Pancreas (tissue), 10 donors: ENCODE measurements at regions of chr9 and their contacts with region 1.

Region 1: GRCh38 chr9:136122425-136123383 is 4.0 kb upstream of the TMEM250 start:
- DNase-seq: peak; percentile 54 to 93 (median 79)
- ATAC-seq: peak in 3 of 4 donors; percentile 43 to 65 (median 59)
- H3K4me3 ChIP-seq: no peak overlapping the region
- H3K27ac ChIP-seq: no peak overlapping the region
- H3K4me1 ChIP-seq: peaks cover 0 to 15% (median 6%) of the 10 kb centered on the region in 3 donors
- H3K27me3 ChIP-seq: no peaks in the 10 kb centered on the region
- CTCF ChIP-seq: peak; percentile 88 to 94 (median 93)

Region 2: GRCh38 chr9:135864447-135865049 is 258.2 kb before region 1 on chr9:
- intact Hi-C with region 1: loop called in 1 of 3 experiments (anchors 5 kb)
- DNase-seq: peak in 5 of 6 donors; percentile 32 to 89 (median 60)
- ATAC-seq: peak in 3 of 4 donors; percentile 76 to 86 (median 84)
- H3K4me3 ChIP-seq: no peak overlapping the region
- H3K27ac ChIP-seq: no peak overlapping the region
- H3K4me1 ChIP-seq: no peaks in the 10 kb centered on the region
- H3K27me3 ChIP-seq: no peaks in the 10 kb centered on the region
- CTCF ChIP-seq: peak; percentile 69 to 80 (median 74)

Region 3: GRCh38 chr9:135971892-135972291 is 150.8 kb before region 1 on chr9:
- intact Hi-C with region 1: loop called (anchors 2 to 10 kb)
- DNase-seq: peak; percentile 76 to 93 (median 86)
- ATAC-seq: peak; percentile 63 to 91 (median 82)
- H3K4me3 ChIP-seq: no peak overlapping the region
- H3K27ac ChIP-seq: no peak overlapping the region
- H3K4me1 ChIP-seq: peaks cover 0 to 2% (median 0%) of the 10 kb centered on the region in 3 donors
- H3K27me3 ChIP-seq: no peaks in the 10 kb centered on the region
- CTCF ChIP-seq: no peak